ENCODE measurements at regions of chr22 and their contacts with region 1.

Region 1: GRCh38 chr22:37428649-37429586 is 1.6 kb upstream of the ELFN2 start:
- DNase-seq: peak; percentile 27
- ATAC-seq: peak; percentile 67
- H3K4me3 ChIP-seq: no peak overlapping the region
- H3K27ac ChIP-seq: no peak overlapping the region
- H3K4me1 ChIP-seq: peaks cover 8% of the 10 kb centered on the region
- H3K27me3 ChIP-seq: no peaks in the 10 kb centered on the region
- CTCF ChIP-seq: peak; percentile 88

Region 2: DNA sequence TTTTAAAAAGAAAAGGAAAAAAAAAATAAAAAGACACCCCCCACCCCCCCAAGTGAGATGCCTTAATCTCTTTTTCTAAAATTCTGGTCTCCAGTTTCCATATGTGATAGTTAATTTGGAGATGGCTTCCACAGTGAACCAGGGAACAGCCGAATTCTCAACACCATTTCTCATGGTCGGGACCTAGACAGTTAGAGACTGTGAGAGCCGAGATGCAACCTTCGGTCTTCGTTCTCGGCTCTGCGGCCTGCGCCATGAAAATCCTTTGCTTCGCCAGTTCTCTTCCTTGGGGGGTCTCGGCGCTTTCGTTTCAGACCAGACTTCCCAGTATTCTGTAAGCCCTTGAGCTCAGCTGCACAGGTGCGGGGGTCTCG is 726.1 kb before region 1 on chr22:
- CTCF ChIA-PET with region 1: interaction called, 10 read pairs
- POLR2A ChIA-PET with region 1: no interaction called
- in situ Hi-C with region 1: no loop called
- intact Hi-C with region 1: no loop called
- DNase-seq: no peak
- ATAC-seq: 0 out of 2 replicates have a peak, but pooled peaks have one; percentile 33
- H3K4me3 ChIP-seq: peak overlapping the region; percentile 27 to 30
- H3K27ac ChIP-seq: no peak overlapping the region
- H3K4me1 ChIP-seq: peaks cover 5% of the 10 kb centered on the region; the same call in 1 of the 2 replicates
- H3K27me3 ChIP-seq: peaks cover 4% of the 10 kb centered on the region
- CTCF ChIP-seq: no peak

Region 3: DNA sequence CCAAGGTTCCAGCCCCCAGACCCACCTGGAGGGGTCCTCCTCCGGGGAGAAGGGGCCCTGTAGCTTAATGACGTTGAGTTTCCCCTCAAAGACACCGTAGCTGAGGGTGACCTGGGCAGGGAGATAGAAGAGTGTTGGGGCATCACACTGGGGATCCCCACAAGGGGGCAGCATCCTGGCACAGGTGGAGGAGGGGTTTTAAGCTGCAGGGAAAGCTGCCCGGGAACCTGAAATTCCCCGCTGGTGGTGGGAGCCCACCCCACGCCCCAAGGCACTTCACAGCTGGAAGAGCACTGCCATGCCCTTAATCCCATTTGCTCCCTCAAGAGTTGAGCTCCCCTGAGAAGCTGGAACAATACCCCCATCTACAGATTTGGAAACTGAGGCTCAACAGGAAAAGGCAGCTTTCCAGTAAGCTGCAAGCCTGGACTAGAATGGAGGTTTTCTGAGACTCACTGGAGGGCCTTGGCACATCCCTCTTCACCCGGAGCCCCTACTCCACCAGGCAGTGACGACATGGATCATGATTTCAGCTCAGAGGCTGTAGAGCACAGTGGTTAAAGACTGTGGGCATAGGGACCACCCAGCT is 43.6 kb after region 1 on chr22:
- CTCF ChIA-PET with region 1: no interaction called
- POLR2A ChIA-PET with region 1: no interaction called
- in situ Hi-C with region 1: no loop called
- intact Hi-C with region 1: no loop called
- DNase-seq: no peak
- ATAC-seq: peak; percentile 61; the same call in 1 of the 2 replicates
- H3K4me3 ChIP-seq: no peak overlapping the region
- H3K27ac ChIP-seq: no peak overlapping the region
- H3K4me1 ChIP-seq: no peaks in the 10 kb centered on the region
- H3K27me3 ChIP-seq: no peaks in the 10 kb centered on the region
- CTCF ChIP-seq: peak; percentile 79; the same call in 1 of the 2 replicates

Region 4: GRCh38 chr22:37842015-37842793 is 413.3 kb after region 1 on chr22:
- CTCF ChIA-PET with region 1: no interaction called
- POLR2A ChIA-PET with region 1: no interaction called
- in situ Hi-C with region 1: no loop called
- intact Hi-C with region 1: no loop called
- DNase-seq: no peak
- ATAC-seq: no peak
- H3K4me3 ChIP-seq: no peak overlapping the region; a peak in 1 of 4 replicates
- H3K27ac ChIP-seq: no peak overlapping the region
- H3K4me1 ChIP-seq: no peaks in the 10 kb centered on the region
- H3K27me3 ChIP-seq: no peaks in the 10 kb centered on the region
- CTCF ChIP-seq: no peak

Measured in Panc1 (cell line).